ENCODE measurements at regions of chr9 and their contacts with region 1.

Region 1: DNA sequence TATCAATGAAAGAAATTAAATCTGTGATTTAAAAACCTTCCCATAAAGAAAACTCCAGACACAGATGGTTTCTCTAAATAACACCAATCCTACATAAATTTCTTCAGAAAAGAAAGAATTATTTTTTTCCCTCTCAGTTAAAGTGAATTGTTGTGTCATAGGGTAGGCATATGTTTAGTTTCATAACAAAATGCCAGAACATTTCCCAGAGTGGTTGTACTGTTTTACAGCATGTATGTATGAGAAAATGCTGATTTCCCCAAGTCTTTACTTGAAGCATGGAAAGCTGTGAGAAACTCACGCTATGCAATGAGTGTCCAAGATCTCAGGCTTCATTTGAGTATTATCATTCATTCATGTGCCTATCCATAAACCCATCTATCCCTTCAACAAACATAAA is 582.5 kb downstream of the ELAVL2 start:
- DNase-seq: no peak
- ATAC-seq: no peak
- H3K4me3 ChIP-seq: no peak overlapping the region
- H3K4me1 ChIP-seq: no peaks in the 10 kb centered on the region
- CTCF ChIP-seq: no peak

Region 2: GRCh38 chr9:23011669-23012068 is 231.9 kb before region 1 on chr9:
- intact Hi-C with region 1: no loop called
- DNase-seq: no peak
- ATAC-seq: no peak
- H3K4me3 ChIP-seq: no peak overlapping the region
- H3K4me1 ChIP-seq: no peaks in the 10 kb centered on the region
- CTCF ChIP-seq: no peak

Region 3: GRCh38 chr9:23088932-23089366 is 154.6 kb before region 1 on chr9:
- intact Hi-C with region 1: no loop called
- DNase-seq: no peak
- ATAC-seq: no peak
- H3K4me3 ChIP-seq: no peak overlapping the region
- H3K4me1 ChIP-seq: no peaks in the 10 kb centered on the region
- CTCF ChIP-seq: no peak

Region 4: GRCh38 chr9:23307731-23308513 is 64.4 kb after region 1 on chr9:
- intact Hi-C with region 1: loop called in 1 of 2 experiments (anchors 10 kb)
- DNase-seq: no peak
- ATAC-seq: no peak
- H3K4me3 ChIP-seq: no peak overlapping the region
- H3K4me1 ChIP-seq: no peaks in the 10 kb centered on the region
- CTCF ChIP-seq: no peak

Region 5: DNA sequence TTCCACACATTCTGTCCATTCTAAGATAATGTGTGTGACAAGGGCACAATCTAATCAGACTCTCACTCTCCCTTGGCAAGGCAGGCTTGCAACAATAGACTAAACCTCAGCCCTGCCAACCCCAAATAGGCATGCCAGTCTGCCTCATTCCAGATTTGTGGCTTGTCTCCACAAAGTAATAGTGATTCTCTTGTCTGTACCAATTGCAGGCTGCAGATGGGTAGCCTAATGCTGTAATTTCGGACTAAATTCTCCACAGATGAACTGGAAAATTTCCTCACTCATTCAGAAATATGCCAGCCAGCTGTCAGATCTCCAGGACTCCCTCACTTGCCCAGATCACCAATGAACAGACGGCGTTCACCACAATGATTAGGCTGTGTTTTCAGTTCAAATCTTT is 168.9 kb after region 1 on chr9:
- intact Hi-C with region 1: no loop called
- DNase-seq: no peak
- ATAC-seq: no peak
- H3K4me3 ChIP-seq: no peak overlapping the region
- H3K4me1 ChIP-seq: no peaks in the 10 kb centered on the region
- CTCF ChIP-seq: no peak

Measured in mucosa of descending colon (tissue), 3 donors.